Common myeloid progenitor, CD34-positive (primary cell): ENCODE measurements at regions of chr7 and their contacts with region 1.

Region 1: GRCh38 chr7:30740424-30741181 is 11.3 kb upstream of the INMT start:
- DNase-seq: peak; percentile 42 to 68 (median 58)
- H3K4me3 ChIP-seq: no peak overlapping the region
- H3K27ac ChIP-seq: no peak overlapping the region
- H3K4me1 ChIP-seq: no peaks in the 10 kb centered on the region
- H3K27me3 ChIP-seq: peaks cover 0 to 8% (median 0%) of the 10 kb centered on the region in 5 experiments

Region 2: DNA sequence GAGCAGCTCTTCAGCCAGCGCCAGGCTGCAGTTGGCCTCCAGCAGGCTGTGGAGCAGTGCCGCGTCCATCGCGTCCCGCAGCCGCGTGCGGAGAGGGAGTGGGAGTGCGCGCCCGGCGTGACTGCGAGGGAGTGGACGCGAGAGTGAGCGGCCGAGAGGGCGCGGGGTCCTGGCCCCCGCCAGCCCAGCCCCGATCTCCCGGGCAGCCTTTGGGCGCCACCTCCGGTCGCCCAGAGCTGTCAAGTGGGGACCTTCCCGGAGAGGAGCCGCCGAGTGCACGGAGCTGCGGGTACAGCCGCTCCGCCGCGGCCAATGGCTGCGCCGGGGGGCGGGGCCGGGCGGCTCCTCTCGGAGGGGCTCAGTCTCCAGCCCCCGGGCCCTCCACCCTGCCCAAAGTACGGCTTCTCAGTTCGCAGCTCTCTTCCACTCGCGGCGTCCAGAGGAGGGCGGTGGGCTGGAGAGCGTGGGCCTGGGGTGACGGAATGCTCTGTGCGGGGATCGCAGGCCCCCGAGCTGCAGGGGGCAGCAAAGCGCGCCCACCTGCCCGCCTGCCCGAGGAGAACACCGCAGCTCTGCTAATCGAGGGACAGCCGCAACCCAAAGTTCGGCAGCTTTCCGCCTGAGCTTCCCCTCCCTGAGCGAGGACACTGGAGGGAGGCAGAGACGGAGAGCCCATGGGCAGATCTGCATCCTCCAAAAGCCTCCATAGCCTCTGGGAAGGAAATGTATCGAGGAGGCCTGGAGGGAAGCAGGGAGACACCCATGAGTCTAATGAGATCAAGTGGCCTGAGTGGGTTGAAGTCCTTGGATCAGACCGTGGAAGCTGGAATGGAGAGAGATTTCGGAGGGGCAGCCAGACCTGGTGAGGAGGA is 58.2 kb before region 1 on chr7 and contains the start of gene CRHR2:
- CTCF ChIA-PET with region 1: interaction called, 40 read pairs
- POLR2A ChIA-PET with region 1: no interaction called
- DNase-seq: peak; percentile 36 to 69 (median 61)
- H3K4me3 ChIP-seq: peak within 1 kb of the TSS; percentile 25 to 74 (median 52)
- H3K27ac ChIP-seq: no peak within 1 kb of the TSS
- H3K4me1 ChIP-seq: peaks cover 0 to 18% (median 15%) of the 10 kb centered on the region in 4 experiments
- H3K27me3 ChIP-seq: peaks cover 0 to 80% (median 27%) of the 10 kb centered on the region in 5 experiments

Region 3: DNA sequence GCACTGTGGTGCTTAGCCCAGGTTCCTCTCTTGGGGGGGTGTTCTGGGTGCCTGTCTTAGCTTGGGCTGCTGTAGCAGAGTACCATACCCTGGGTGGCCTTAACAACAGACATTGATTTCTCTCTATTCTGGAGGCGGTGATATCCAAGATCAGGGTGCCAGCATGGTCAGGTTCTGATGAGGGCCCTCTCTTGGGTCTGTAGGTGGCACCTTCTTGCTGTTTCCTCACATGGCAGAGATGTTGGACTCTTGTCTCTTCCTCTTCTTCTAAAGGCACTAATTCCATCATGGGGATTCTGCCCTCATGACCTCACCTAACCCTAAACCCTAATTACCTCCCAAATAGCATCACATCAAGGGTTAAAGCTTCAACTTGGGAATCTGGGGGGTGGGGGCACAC is 38.4 kb before region 1 on chr7:
- CTCF ChIA-PET with region 1: interaction called, 23 read pairs
- POLR2A ChIA-PET with region 1: interaction called, 3 read pairs
- DNase-seq: peak; percentile 25 to 45 (median 44)
- H3K4me3 ChIP-seq: no peak overlapping the region
- H3K27ac ChIP-seq: no peak overlapping the region
- H3K4me1 ChIP-seq: peaks cover 0 to 15% (median 11%) of the 10 kb centered on the region in 4 experiments
- H3K27me3 ChIP-seq: peaks cover 0 to 3% (median 0%) of the 10 kb centered on the region in 5 experiments

Region 4: GRCh38 chr7:30950197-30950596 is 209.6 kb after region 1 on chr7:
- CTCF ChIA-PET with region 1: no interaction called
- POLR2A ChIA-PET with region 1: no interaction called
- DNase-seq: no peak
- H3K4me3 ChIP-seq: no peak overlapping the region
- H3K27ac ChIP-seq: no peak overlapping the region
- H3K4me1 ChIP-seq: no peaks in the 10 kb centered on the region
- H3K27me3 ChIP-seq: peaks cover 0 to 8% (median 2%) of the 10 kb centered on the region in 5 experiments